ENCODE measurements at regions of chr5 and their contacts with region 1.

Region 1: DNA sequence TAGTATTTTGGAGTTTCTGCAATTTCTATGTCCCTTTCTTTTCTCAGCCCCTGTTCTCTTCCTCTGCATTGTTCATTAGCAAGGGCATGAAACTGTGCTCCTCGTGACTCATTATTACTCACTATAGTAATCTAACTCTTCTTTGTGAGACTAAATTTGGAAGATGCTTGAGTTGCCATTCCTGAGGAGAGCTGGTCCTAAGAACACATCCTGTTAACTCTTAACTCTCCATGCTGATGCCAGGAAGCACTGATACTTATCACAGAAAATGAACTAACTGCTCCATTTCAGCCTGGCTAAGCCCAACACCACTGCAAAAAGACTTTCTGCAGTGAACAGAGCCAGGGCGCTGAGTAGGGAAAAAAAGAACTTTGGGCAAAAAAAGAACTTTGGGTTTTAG is 10.6 kb upstream of the CSNK1A1 start:
- DNase-seq: no peak
- ATAC-seq: peak; percentile 58
- H3K4me3 Mint-ChIP-seq: no peak overlapping the region
- H3K27ac Mint-ChIP-seq: peak overlapping the region; percentile 94
- H3K4me1 Mint-ChIP-seq: peaks cover 38% of the 10 kb centered on the region
- H3K27me3 Mint-ChIP-seq: no peaks in the 10 kb centered on the region
- CTCF ChIP-seq: no peak

Region 2: DNA sequence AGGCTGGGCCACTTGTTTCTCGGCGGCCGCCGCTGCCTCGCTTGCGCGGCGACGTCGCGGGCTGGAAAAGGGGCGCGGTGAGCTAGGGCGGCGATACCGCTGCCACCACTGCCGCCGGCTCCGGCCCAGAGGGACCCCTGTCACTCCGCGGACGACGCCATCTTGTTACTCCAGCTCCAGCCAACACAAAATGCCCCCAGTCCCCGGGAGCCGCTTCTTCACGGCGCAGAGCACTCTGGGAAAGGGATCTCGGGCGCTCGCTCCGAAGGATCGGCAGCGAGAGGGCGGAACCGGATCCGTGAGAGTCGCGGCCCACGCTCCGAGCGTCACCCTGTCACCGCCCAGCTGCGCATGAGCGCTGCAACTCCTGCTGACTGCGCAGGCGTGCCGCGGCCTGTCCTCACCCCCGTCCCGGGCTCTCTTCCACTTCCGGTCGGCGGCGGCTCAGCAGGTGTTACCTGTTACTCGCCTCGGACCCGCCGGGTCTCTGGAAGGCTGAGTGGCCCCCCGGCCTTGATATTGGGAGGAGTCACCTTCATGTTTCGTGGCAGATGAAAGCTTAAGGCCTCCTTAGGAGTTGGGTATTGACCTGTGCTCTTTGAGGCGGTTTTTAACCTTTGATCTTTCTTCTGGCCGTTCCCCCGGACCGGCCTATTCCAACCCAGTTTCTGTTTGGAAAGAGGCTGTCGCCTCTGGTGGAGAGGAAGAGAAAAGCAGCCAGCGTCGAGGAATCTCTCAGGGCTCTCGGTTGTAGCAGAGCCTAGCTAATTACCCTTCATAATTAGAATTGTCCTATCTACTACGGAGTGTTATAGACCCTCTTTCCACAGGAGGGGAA is 10.4 kb before region 1 on chr5 and contains the start of gene CSNK1A1:
- CTCF ChIA-PET with region 1: interaction called, 22 read pairs
- POLR2A ChIA-PET with region 1: interaction called, 11 read pairs
- DNase-seq: peak; percentile 98
- ATAC-seq: peak; percentile 90
- H3K4me3 Mint-ChIP-seq: peak within 1 kb of the TSS; percentile 98
- H3K27ac Mint-ChIP-seq: peak within 1 kb of the TSS; percentile 99
- H3K4me1 Mint-ChIP-seq: peaks cover 33% of the 10 kb centered on the region
- H3K27me3 Mint-ChIP-seq: no peaks in the 10 kb centered on the region
- CTCF ChIP-seq: peak; percentile 47
- total RNA-seq, gene CSNK1A1: 265 to 276 TPM (median 269 TPM) in 3 replicates

Region 3: DNA sequence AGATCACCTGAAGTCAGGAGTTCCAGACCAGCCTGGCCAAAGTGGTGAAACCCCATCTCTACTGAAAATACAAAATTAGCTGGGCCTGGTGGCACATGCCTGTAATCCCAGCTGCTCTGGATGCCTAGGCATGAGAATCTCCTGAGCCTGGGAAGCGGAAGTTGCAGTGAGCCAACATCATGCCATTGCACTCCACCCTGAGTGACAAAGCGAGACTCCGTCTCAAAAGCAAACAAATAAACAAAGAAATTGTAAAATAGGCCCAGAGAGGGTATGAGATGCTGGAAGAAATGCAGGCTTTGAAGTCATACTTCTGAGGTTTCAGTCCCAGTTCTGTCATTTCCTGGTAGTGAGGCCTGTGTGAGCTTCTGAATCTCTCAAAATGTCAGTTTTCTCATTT is 14.2 kb after region 1 on chr5:
- CTCF ChIA-PET with region 1: interaction called, 10 read pairs
- POLR2A ChIA-PET with region 1: no interaction called
- DNase-seq: no peak
- ATAC-seq: no peak
- H3K4me3 Mint-ChIP-seq: no peak overlapping the region
- H3K27ac Mint-ChIP-seq: no peak overlapping the region
- H3K4me1 Mint-ChIP-seq: peaks cover 7% of the 10 kb centered on the region
- H3K27me3 Mint-ChIP-seq: peaks cover 25% of the 10 kb centered on the region
- CTCF ChIP-seq: no peak

Measured in WTC11 (cell line).